Activated CD4-positive, alpha-beta T cell treated with anti-CD3 and anti-CD28 coated beads for 36 hours (primary cell): ENCODE measurements at regions of chr3 and their contacts with region 1.

Region 1: DNA sequence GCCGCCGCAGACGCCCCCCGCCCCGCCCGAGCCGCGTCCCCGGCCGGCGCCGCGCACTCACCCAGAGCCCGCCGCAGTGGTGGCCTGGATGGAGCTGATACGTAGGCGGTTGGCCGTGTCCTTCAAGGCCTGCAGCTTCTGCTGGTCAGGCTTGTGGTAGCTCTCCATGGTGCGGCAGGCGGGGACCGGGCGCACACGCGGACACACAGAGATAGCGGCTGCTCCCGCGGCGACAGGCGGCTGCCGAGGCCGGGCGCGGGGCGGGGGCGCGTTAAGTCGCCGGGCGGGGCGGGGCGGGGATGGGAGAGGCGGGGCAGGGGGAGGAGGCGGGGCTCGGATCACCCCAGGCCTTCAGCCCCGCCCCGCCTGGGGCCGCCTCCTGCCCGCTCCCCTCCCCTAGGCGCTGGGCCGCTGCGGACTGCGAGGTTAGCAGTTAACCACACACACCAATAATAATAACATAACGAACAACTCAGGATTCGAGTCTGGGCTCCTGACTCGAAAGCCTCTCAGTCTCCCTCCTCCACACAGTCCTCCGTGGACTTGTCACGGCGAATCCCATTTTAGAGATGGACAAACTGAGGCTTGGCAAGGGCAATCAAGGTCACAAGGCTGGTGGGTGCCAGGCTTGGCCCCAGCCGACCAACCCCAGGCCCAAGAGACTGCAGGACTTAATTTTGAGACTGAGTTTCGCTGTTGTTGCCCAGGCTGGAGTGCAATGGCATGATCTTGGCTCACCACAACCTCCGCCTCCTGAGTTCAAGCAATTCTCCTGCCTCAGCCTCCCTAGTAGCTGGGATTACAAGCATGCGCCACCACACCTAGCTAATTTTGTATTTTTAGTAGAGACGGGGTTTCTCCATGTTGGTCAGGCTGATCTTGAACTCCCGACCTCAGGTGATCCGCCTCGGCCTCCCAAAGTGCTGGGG is at the start of gene TKT:
- DNase-seq: peak; percentile 92
- ATAC-seq: peak; percentile 85
- H3K4me3 Mint-ChIP-seq: peak within 1 kb of the TSS; percentile 87
- H3K27ac Mint-ChIP-seq: peak within 1 kb of the TSS; percentile 53
- H3K4me1 Mint-ChIP-seq: peaks cover 32% of the 10 kb centered on the region
- H3K27me3 Mint-ChIP-seq: no peaks in the 10 kb centered on the region
- total RNA-seq, gene TKT: 320 to 418 TPM

Region 2: DNA sequence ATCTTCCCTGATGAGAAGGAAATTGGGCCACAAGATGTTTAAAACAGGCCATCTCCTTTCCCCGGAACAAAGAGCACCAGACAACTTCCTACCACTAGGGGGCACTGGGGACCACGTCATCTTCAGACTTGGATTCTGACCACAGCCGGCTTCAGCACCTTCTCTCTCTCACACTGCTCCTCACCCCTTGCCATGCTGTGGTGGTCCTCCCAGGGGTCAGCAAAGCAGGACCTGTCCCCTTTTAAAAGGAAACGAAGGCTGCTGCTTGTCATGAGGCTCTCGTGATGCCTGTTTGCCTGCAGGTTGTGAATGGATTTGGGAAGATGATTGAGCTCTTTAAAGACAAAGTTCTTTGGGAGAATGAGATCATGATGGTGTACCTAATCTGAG is 142.0 kb before region 1 on chr3:
- CTCF ChIA-PET with region 1: interaction called, 4 read pairs
- POLR2A ChIA-PET with region 1: no interaction called
- intact Hi-C with region 1: loop called in 1 of 2 experiments (anchors 5 kb)
- DNase-seq: peak; percentile 91
- ATAC-seq: peak; percentile 49
- H3K4me3 Mint-ChIP-seq: no peak overlapping the region
- H3K27ac Mint-ChIP-seq: no peak overlapping the region
- H3K4me1 Mint-ChIP-seq: peaks cover 15% of the 10 kb centered on the region
- H3K27me3 Mint-ChIP-seq: no peaks in the 10 kb centered on the region

Region 3: GRCh38 chr3:53160660-53161449 is 95.2 kb before region 1 on chr3 and contains the start of gene PRKCD:
- CTCF ChIA-PET with region 1: no interaction called
- POLR2A ChIA-PET with region 1: no interaction called
- intact Hi-C with region 1: loop called in 1 of 2 experiments (anchors 1 kb)
- DNase-seq: peak; percentile 91
- ATAC-seq: peak; percentile 75
- H3K4me3 Mint-ChIP-seq: peak within 1 kb of the TSS; percentile 75
- H3K27ac Mint-ChIP-seq: peak within 1 kb of the TSS; percentile 83
- H3K4me1 Mint-ChIP-seq: peaks cover 19% of the 10 kb centered on the region
- H3K27me3 Mint-ChIP-seq: peaks cover 10% of the 10 kb centered on the region
- total RNA-seq, gene PRKCD: 22.0 to 26.5 TPM

Region 4: GRCh38 chr3:53287131-53287629 is 31.1 kb after region 1 on chr3:
- CTCF ChIA-PET with region 1: no interaction called
- POLR2A ChIA-PET with region 1: no interaction called
- intact Hi-C with region 1: loop called in 1 of 2 experiments (anchors 1 kb)
- DNase-seq: peak; percentile 55
- ATAC-seq: peak; percentile 92
- H3K4me3 Mint-ChIP-seq: no peak overlapping the region
- H3K27ac Mint-ChIP-seq: peak overlapping the region; percentile 85
- H3K4me1 Mint-ChIP-seq: peaks cover 14% of the 10 kb centered on the region
- H3K27me3 Mint-ChIP-seq: no peaks in the 10 kb centered on the region

Region 5: GRCh38 chr3:53891497-53892285 is 635.7 kb after region 1 on chr3 and contains the start of gene SELENOK:
- CTCF ChIA-PET with region 1: no interaction called
- POLR2A ChIA-PET with region 1: no interaction called
- intact Hi-C with region 1: loop called (anchors 2 to 5 kb)
- DNase-seq: peak; percentile 98
- ATAC-seq: peak; percentile 95
- H3K4me3 Mint-ChIP-seq: peak within 1 kb of the TSS; percentile 85
- H3K27ac Mint-ChIP-seq: peak within 1 kb of the TSS; percentile 95
- H3K4me1 Mint-ChIP-seq: peaks cover 48% of the 10 kb centered on the region
- H3K27me3 Mint-ChIP-seq: peaks cover 6% of the 10 kb centered on the region
- total RNA-seq, gene SELENOK: 31.6 to 45.1 TPM